ENCODE measurements at regions of chr1 and their contacts with region 1.

Region 1: GRCh38 chr1:1687846-1688245 is 4.7 kb downstream of the SLC35E2B start:
- DNase-seq: peak in 1 of 2 donors; percentile 17
- H3K4me3 ChIP-seq: no peak overlapping the region
- H3K27ac ChIP-seq: no peak overlapping the region
- H3K4me1 ChIP-seq: peaks cover 0 to 29% (median 19%) of the 10 kb centered on the region in 4 donors
- H3K27me3 ChIP-seq: no peaks in the 10 kb centered on the region
- CTCF ChIP-seq: no peak

Region 2: DNA sequence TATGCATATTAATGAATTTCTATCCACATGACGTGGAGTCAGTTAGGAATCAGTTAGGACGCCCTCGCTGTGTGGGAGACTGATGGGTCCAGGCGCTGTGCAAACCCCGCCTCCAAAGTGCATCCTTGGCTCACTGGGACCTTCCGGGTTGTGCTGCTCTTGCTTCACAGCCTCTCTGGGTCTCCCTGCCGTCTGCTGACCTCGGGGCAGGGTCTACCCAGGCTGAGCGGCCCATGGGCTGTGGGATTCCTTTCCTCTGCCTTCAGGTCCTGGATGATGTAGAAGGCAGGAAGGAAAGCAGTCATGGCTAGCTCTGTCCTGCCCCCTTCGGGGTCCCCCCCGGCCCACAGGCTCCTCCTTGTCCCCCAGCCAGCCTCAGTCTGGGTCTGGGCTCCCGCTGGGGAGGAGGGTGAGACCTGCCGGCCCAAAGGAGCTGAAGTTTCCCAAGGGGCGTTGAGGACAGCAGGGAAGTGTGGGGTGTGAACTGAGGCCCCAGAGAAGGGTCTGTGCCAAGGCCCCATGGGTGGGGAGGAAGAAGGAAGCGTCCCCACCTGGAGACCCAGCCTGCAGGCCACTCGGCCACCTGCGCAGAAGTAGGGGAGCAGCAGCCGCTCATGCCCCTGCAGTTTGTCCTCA is 61.0 kb after region 1 on chr1:
- intact Hi-C with region 1: loop called (anchors 5 kb)
- DNase-seq: no peak
- H3K4me3 ChIP-seq: no peak overlapping the region
- H3K27ac ChIP-seq: no peak overlapping the region
- H3K4me1 ChIP-seq: no peaks in the 10 kb centered on the region
- H3K27me3 ChIP-seq: no peaks in the 10 kb centered on the region
- CTCF ChIP-seq: no peak

Measured in tibial artery (tissue), 4 donors.